IMR-90 (cell line): ENCODE measurements at regions of chr12 and their contacts with region 1.

Region 1: DNA sequence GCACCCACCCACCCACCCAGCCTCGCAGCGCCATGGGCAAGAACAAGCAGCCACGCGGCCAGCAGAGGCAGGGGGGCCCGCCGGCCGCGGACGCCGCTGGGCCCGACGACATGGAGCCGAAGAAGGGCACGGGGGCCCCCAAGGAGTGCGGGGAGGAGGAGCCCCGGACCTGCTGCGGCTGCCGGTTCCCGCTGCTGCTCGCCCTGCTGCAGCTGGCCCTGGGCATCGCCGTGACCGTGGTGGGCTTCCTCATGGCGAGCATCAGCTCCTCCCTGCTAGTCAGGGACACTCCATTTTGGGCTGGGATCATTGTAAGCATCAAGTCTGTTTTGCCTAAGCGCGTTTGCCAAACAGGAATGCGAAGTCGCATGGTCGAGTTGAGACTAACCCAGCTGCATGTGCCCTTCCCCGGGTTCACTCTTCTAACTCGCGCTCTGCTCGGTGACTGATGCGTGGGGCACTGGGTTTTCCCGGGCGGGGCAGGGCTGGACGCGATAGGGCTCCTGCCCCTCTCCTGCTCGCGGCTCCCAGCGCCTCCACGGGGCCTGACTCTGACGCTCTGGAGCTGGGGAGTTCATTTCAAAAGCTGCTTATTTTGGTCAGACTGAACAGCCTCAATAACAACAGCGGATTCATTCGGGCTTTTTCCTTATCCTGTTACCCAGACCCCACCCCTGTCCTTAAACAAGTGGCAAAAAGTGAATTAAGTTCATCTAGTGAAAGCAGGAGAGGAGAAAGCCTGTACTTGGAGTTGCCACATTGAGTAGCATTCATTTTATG is 458 bp downstream of the SSPN start:
- DNase-seq: peak; percentile 31
- ATAC-seq: peak; percentile 81
- H3K4me3 ChIP-seq: peak overlapping the region; percentile 51
- H3K27ac ChIP-seq: peak overlapping the region; percentile 72
- H3K4me1 ChIP-seq: peaks cover 2% of the 10 kb centered on the region
- H3K27me3 ChIP-seq: no peaks in the 10 kb centered on the region
- CTCF ChIP-seq: no peak
- POLR2A ChIP-seq: no peak
- RAD21 ChIP-seq: no peak

Region 2: GRCh38 chr12:25320123-25321006 is 875.5 kb before region 1 on chr12:
- CTCF ChIA-PET with region 1: no interaction called
- POLR2A ChIA-PET with region 1: interaction called, 15 read pairs
- dilution Hi-C with region 1: no loop called
- in situ Hi-C with region 1: no loop called
- intact Hi-C with region 1: no loop called
- DNase-seq: no peak
- ATAC-seq: no peak
- H3K4me3 ChIP-seq: no peak overlapping the region
- H3K27ac ChIP-seq: no peak overlapping the region
- H3K4me1 ChIP-seq: peaks cover 3% of the 10 kb centered on the region; the same call in 1 of the 2 replicates
- H3K27me3 ChIP-seq: no peaks in the 10 kb centered on the region
- CTCF ChIP-seq: no peak
- POLR2A ChIP-seq: no peak
- RAD21 ChIP-seq: no peak

Region 3: DNA sequence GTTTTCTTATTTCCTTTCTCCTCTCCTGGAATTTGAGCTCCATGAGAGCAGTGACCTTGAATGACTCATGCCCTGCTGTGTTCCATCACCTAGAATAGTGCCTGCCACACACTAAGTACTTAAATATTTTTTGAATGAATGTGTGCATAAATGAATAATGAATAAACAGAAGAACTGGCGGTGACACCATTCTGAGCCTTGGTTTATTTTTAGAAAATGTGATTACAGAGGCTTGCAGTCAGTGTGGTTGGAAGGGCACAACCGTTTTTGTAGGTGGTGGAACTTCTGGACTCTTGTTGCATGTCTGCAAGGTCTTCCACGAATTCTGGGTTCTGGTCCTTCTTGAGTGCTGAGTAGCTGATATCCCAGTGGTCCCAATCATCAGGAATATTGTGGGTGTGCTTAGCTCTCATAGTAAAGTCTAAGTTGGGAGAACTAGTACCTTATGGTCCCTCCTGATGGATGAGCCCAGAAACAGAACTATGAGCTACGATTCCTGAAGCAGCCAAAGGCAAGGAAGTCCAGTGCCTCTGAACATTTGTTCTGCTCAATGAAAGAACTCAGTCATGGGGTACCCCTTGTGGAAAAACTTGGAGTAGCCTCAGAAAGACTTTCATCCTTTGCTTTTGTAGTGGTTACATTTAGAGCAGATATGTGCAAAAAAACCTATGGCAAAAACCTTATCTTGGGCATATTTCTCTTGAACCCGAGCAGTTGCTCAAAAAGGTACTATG is 42.2 kb before region 1 on chr12:
- CTCF ChIA-PET with region 1: interaction called, 3 read pairs
- POLR2A ChIA-PET with region 1: no interaction called
- dilution Hi-C with region 1: no loop called
- in situ Hi-C with region 1: no loop called
- intact Hi-C with region 1: loop called (anchors 5 kb)
- DNase-seq: peak; percentile 97
- ATAC-seq: peak; percentile 92
- H3K4me3 ChIP-seq: no peak overlapping the region
- H3K27ac ChIP-seq: no peak overlapping the region; the same call in 1 of the 2 replicates
- H3K4me1 ChIP-seq: peaks cover 19% of the 10 kb centered on the region
- H3K27me3 ChIP-seq: no peaks in the 10 kb centered on the region; the same call in 1 of the 2 replicates
- CTCF ChIP-seq: peak; percentile 20; the same call in 1 of the 2 replicates
- POLR2A ChIP-seq: no peak; the same call in 1 of the 2 replicates
- RAD21 ChIP-seq: peak; percentile 36